Breast epithelium (tissue), 4 donors: ENCODE measurements at regions of chr9 and their contacts with region 1.

Region 1: DNA sequence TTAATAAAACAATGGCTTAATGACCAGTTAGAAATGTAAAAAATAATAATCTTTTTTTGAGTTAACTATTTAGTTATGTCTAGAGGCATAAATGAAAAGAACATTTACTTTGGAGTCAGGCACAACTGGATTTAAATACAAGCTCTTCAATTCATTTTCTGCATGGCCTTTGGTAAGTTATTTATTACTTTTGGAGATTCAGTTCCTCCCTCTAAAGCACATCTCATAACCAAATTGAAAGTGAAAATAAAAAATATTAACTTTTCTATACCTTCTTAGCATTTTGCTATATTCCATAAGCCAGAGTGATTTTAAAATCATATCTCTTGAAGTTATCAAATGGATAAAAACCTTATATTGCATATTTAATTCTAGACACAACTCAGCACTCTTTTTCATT is 434.9 kb upstream of the SMARCA2 start:
- DNase-seq: no peak
- H3K4me3 ChIP-seq: no peak overlapping the region
- H3K27ac ChIP-seq: no peak overlapping the region
- H3K4me1 ChIP-seq: no peaks in the 10 kb centered on the region
- H3K27me3 ChIP-seq: no peaks in the 10 kb centered on the region
- CTCF ChIP-seq: no peak
- POLR2A ChIP-seq: no peak

Region 2: DNA sequence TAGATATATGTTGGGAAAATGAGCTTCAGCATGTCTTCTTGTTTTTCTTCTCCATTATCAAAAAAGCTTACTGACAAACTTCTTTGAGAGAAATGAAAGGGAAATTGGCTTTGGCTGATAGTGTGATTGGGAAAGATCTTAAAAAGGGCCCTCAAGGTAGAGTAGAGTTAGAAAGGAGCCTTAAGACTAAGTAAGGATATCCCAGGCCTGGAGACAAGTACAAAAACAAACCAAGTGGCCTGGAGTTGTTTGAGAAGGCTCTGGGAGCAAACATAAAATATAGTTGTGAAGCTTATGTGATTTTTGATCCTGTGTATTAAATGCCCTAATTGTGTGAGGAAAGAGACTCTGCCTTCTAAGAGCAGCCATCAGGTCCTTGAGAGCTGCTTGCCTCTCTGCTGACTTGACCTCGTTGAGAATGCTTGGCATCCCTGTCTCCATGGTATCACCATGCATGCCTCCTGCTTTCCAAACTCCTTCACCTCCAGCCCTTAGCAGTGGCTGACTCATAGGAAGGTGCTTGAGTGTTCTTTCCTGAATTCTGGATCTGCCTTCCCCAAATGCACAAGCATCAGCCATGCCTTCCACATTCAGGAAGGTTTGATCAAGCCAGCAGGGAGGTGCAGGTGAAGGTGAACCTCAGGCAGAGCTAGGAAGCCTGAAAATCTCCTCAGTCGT is 513.8 kb after region 1 on chr9:
- intact Hi-C with region 1: loop called (anchors 5 kb)
- DNase-seq: no peak
- H3K4me3 ChIP-seq: no peak overlapping the region
- H3K27ac ChIP-seq: no peak overlapping the region
- H3K4me1 ChIP-seq: no peaks in the 10 kb centered on the region
- H3K27me3 ChIP-seq: no peaks in the 10 kb centered on the region
- CTCF ChIP-seq: no peak
- POLR2A ChIP-seq: no peak